Heart left ventricle (tissue), 16 donors: ENCODE measurements at regions of chr12 and their contacts with region 1.

Region 1: GRCh38 chr12:131903260-131904255 is 9.1 kb downstream of the ULK1 start:
- DNase-seq: no peak
- ATAC-seq: no peak
- H3K4me3 ChIP-seq: no peak overlapping the region
- H3K27ac ChIP-seq: peak overlapping the region in 8 of 12 donors; percentile 54 to 83 (median 78)
- H3K4me1 ChIP-seq: peaks cover 23 to 74% (median 47%) of the 10 kb centered on the region in 12 donors
- H3K27me3 ChIP-seq: no peaks in the 10 kb centered on the region
- CTCF ChIP-seq: no peak
- POLR2A ChIP-seq: no peak

Region 2: DNA sequence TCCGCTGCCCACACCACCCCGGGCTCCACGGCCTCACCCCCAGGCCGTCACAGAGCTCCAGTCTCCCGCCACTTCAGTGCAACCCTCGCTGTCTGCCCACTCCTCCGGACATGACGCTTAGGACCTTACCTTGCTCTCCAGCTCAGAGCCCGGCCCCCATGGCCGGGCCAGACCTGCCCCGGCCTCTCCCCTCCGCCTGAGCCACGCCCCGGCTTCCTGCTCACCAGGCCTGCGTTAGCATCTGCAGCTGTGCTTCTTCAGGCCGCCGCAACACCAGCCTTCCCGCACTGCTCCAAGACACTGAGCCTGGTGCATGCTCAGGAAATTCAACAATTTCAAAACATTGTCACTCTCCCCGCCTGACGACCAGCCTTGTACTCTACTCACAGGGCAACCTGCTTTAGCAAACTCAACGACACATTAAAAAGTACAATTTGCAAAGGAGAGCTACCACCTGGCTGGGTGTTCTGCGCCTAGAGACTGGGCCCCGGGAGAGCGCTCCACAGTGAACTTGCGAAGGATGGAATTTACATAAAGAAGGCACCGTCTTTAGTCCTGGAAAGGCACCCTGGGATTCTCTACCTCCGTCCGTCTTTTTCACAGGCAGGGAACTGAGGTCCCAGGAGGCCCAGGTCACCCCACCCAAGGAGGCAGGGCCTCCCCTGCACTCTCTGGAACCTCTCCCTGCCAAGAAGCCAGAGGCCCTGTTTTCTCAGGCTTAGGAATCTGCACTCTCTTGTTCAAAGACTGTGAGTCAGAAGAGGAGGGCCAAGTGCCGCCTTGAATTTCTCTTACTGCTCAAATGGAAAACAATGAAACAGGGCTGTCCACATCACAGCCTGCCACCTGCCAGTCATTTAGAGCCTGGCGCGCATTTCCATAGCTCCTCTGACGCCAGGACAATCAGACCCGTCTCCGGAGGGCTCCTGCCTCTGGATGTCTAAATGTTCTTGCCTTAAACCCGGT is 1115.8 kb before region 1 on chr12:
- intact Hi-C with region 1: no loop called
- DNase-seq: peak in 1 of 5 donors; percentile 3
- ATAC-seq: no peak
- H3K4me3 ChIP-seq: no peak overlapping the region
- H3K27ac ChIP-seq: no peak overlapping the region
- H3K4me1 ChIP-seq: no peaks in the 10 kb centered on the region
- H3K27me3 ChIP-seq: no peaks in the 10 kb centered on the region
- CTCF ChIP-seq: no peak
- POLR2A ChIP-seq: no peak

Region 3: DNA sequence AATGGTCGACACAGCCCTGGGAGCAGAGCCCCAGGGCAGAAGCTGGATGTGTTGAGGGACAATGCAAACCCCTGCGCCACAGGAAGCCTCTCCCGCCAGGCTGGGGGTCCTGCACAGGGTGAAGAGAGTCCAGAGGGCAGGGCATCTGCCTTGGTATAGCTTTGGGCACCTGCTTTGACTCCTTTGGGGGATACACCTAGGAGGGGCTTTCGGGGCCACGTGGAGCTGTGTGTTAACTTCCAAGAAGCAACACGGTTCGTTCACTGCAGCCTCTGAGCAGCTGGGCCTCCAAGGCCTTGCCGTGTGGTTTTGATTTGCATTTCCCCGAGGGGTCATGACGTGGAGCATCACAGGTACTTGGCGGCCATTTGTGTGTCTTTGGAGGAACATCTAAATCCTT is 19.7 kb after region 1 on chr12:
- intact Hi-C with region 1: loop called in 1 of 10 experiments (anchors 2 kb)
- DNase-seq: peak in 1 of 5 donors; percentile 33
- ATAC-seq: no peak
- H3K4me3 ChIP-seq: no peak overlapping the region
- H3K27ac ChIP-seq: peak overlapping the region in 6 of 12 donors; percentile 0 to 81 (median 70)
- H3K4me1 ChIP-seq: peaks cover 0 to 32% (median 9%) of the 10 kb centered on the region in 12 donors
- H3K27me3 ChIP-seq: no peaks in the 10 kb centered on the region
- CTCF ChIP-seq: no peak
- POLR2A ChIP-seq: no peak